ENCODE measurements at regions of chr6 and their contacts with region 1.

Region 1: DNA sequence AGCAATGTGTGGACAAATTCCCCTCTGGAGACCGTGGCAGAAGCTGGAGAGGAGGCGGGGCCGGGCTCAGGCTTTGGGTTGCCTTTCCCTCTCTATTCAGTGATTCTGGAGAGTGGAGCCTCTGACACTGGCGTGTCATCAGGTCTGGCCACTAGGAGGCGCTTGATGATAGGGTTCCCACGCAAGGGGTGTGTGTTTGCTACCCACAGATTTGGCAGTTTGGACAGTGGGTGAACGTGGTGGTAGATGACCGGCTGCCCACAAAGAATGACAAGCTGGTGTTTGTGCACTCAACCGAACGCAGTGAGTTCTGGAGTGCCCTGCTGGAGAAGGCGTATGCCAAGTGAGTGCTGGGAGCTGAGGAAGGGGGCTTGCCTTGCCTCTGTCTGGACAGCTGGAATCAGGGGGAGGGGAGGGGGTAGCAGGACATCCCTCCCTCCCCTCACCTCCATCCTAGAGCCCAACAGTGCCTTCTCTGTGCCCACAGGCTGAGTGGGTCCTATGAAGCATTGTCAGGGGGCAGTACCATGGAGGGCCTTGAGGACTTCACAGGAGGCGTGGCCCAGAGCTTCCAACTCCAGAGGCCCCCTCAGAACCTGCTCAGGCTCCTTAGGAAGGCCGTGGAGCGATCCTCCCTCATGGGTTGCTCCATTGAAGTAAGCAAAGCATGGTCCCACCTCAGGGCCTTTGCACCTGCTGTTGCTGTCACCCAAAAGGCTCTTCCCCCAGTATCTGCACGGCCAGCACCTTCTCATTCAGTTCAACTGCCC is 14.3 kb downstream of the CAPN11 start:
- DNase-seq: no peak
- H3K4me3 ChIP-seq: no peak overlapping the region
- CTCF ChIP-seq: peak; percentile 81

Region 2: GRCh38 chr6:44058617-44059358 is 114.1 kb before region 1 on chr6:
- CTCF ChIA-PET with region 1: no interaction called
- POLR2A ChIA-PET with region 1: no interaction called
- DNase-seq: peak; percentile 99
- H3K4me3 ChIP-seq: no peak overlapping the region
- CTCF ChIP-seq: no peak

Region 3: DNA sequence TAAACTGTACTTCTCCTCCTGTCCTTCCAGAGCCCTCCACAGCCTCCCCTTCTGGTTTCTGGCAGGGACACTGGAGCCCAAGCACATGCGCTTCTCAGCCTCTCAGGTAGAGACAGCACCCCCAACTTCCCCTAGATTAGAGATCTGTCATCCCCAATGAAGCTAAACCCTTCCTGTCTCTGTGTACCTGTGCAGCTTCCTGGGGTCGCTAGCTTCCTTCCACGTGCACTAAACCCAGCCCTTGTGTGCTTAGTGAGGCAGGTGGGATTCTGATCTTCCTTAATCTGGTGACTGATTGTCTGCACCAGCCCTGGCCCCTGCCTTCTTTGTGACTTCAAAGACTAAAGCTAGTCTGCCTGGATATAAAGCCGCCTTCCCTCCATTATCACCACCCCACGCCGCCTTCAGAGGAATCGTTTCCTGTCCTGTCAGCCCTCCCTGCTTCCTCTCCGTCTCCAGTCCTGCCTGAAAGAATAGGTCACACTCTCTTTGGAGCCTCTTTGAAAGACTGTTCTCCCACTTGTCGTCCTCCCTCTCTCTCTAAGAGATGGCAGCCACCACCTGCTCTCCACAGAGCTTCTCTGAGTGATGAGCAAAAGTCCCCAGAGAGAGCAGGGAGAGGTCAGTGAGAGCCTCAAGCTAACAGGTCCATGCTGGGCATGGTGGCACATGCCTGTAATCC is 13.2 kb after region 1 on chr6:
- CTCF ChIA-PET with region 1: interaction called, 23 read pairs
- POLR2A ChIA-PET with region 1: no interaction called
- DNase-seq: no peak
- H3K4me3 ChIP-seq: no peak overlapping the region
- CTCF ChIP-seq: no peak

Region 4: GRCh38 chr6:44201638-44202303 is 28.9 kb after region 1 on chr6:
- CTCF ChIA-PET with region 1: interaction called, 10 read pairs
- POLR2A ChIA-PET with region 1: no interaction called
- DNase-seq: no peak
- H3K4me3 ChIP-seq: no peak overlapping the region
- CTCF ChIP-seq: no peak

Region 5: GRCh38 chr6:44237813-44238433 is 65.0 kb after region 1 on chr6:
- CTCF ChIA-PET with region 1: interaction called, 31 read pairs
- POLR2A ChIA-PET with region 1: interaction called, 3 read pairs
- DNase-seq: no peak
- H3K4me3 ChIP-seq: peak overlapping the region; percentile 67
- CTCF ChIP-seq: peak; percentile 99

Region 6: DNA sequence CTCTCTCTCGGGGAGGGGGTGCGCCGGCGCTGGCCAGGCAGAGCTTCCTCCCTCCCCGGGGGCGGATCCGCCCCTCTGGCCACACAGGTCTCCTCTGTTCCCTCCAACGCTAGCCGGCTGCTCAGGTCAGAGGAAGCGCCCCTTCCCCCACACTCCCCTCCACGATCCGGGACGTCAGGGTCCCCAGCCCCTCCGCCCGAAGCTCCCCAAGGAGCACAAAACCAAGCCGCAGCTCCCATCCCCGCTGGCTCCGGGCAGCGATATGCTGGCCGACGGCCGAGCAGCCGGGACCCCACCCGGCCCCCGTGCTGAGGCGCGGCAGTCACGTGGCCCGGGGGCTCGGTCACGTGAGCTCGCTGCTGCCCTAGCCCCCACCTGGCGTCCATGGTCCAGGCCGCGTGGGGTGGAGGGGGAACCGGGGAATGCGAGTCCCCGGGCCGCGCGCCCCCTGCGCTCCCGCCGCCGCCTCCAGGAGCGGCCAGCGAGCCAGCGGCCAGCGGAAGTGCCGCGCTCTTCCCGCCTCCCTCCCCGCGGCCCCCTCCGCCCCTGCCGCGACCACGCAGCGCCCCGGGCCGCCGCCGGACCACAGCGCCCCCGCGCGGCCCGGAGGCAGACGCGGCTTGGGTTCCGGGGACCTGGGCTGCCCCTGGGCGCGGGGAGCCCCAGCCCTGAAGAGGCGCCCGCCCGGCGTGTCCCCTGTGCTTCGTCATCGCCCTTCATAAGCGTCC is 84.3 kb after region 1 on chr6 and contains the start of gene SLC35B2:
- CTCF ChIA-PET with region 1: interaction called, 13 read pairs
- POLR2A ChIA-PET with region 1: interaction called, 3 read pairs
- DNase-seq: no peak
- H3K4me3 ChIP-seq: peak within 1 kb of the TSS; percentile 88
- CTCF ChIP-seq: peak; percentile 54

Region 7: GRCh38 chr6:44338228-44339122 is 165.6 kb after region 1 on chr6:
- CTCF ChIA-PET with region 1: interaction called, 25 read pairs
- POLR2A ChIA-PET with region 1: no interaction called
- DNase-seq: no peak
- H3K4me3 ChIP-seq: no peak overlapping the region
- CTCF ChIP-seq: peak; percentile 75

Measured in AG04449 (cell line).